Vagina (tissue), 2 donors: ENCODE measurements at regions of chr5 and their contacts with region 1.

Region 1: GRCh38 chr5:42583322-42583721 is 160.1 kb downstream of the GHR start:
- DNase-seq: no peak
- H3K4me3 ChIP-seq: no peak overlapping the region
- H3K27ac ChIP-seq: no peak overlapping the region
- H3K4me1 ChIP-seq: peaks cover 21% of the 10 kb centered on the region
- H3K27me3 ChIP-seq: no peaks in the 10 kb centered on the region
- CTCF ChIP-seq: peak; percentile 57 to 66 (median 65)
- POLR2A ChIP-seq: no peak

Region 2: DNA sequence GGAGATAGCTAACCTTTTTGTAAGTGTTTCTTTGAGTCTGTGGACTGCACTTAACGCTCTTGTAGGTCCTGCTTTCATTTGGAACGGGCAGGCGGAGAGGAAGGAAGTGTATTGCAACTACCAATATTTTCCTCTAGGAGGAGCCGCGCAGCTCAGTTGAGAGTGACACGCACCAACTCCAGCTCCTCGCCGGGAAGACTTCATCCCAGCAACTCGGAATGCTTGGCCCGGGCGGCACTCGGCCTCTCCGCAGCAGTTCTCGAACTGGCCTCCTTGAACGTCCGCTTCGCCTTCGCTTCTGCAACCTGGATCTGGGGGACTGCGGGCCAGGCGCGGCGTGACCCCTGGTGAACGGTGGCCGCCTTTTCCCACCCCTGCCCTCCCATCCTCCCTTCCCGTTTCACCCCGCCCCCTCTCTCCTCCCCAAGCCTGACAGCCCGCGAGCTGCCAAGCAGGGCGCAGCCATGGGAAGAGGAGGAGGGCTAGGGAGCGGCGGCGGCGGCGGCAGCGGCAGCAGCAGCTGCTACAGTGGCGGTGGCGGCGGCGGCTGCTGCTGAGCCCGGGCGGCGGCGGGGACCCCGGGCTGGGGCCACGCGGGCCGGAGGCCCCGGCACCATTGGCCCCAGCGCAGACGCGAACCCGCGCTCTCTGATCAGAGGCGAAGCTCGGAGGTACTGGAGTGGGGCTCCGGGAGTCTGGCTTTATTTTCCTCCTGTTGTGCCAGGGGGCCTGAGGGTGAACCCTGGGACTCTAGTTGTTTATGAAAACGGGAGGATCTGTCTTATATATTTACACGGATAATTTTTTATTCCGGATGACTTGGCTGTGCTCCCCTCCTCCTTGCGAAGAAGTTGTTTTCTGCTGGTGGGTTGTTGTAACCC is 159.8 kb before region 1 on chr5 and contains the start of gene GHR:
- intact Hi-C with region 1: loop called (anchors 10 kb)
- DNase-seq: peak in 1 of 2 donors; percentile 92
- H3K4me3 ChIP-seq: peak within 1 kb of the TSS; percentile 50 to 89
- H3K27ac ChIP-seq: peak within 1 kb of the TSS; percentile 80
- H3K4me1 ChIP-seq: peaks cover 25% of the 10 kb centered on the region
- H3K27me3 ChIP-seq: no peaks in the 10 kb centered on the region
- CTCF ChIP-seq: peak; percentile 12 to 76 (median 75)
- POLR2A ChIP-seq: no peak
- total RNA-seq, gene GHR: 16.7 TPM

Region 3: DNA sequence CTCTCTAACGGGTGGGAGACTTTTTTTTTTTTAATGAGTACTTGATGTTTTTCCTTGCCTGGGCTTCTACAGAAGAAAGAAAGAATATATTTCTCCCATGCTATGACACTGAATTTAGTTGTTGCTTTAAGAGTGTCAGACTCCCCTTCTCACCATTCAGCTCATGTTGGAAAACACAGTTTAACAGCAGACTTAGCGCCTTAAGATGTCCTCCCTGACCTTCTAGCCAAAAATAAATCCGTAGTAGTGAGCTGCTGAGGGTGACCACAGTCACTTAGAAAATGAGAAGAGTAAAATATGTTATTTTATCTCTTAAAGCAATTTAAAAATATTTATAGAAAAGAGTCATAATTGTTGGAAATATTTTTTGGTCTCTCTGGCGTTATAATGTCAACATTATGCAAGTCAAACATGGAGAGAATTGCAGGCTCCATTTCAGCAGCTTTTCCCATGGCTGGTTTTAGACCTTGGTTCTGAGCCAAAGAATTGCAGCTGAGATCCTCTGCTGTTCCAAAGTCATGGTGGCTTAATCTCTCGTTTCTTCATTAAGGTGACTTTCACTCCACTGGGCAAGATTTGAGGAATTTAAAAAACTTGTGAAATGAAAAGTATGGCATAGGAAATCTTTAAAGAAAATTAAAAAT is 16.5 kb before region 1 on chr5:
- intact Hi-C with region 1: no loop called
- DNase-seq: no peak
- H3K4me3 ChIP-seq: no peak overlapping the region
- H3K27ac ChIP-seq: peak overlapping the region; percentile 25
- H3K4me1 ChIP-seq: peaks cover 28% of the 10 kb centered on the region
- H3K27me3 ChIP-seq: no peaks in the 10 kb centered on the region
- CTCF ChIP-seq: no peak
- POLR2A ChIP-seq: no peak

Region 4: GRCh38 chr5:42894057-42894456 is 310.7 kb after region 1 on chr5:
- intact Hi-C with region 1: no loop called
- DNase-seq: no peak
- H3K4me3 ChIP-seq: no peak overlapping the region
- H3K27ac ChIP-seq: no peak overlapping the region
- H3K4me1 ChIP-seq: no peaks in the 10 kb centered on the region
- H3K27me3 ChIP-seq: no peaks in the 10 kb centered on the region
- CTCF ChIP-seq: no peak
- POLR2A ChIP-seq: no peak